Sciatic nerve (tissue), 2 donors: ENCODE measurements at regions of chr1 and their contacts with region 1.

Region 1: DNA sequence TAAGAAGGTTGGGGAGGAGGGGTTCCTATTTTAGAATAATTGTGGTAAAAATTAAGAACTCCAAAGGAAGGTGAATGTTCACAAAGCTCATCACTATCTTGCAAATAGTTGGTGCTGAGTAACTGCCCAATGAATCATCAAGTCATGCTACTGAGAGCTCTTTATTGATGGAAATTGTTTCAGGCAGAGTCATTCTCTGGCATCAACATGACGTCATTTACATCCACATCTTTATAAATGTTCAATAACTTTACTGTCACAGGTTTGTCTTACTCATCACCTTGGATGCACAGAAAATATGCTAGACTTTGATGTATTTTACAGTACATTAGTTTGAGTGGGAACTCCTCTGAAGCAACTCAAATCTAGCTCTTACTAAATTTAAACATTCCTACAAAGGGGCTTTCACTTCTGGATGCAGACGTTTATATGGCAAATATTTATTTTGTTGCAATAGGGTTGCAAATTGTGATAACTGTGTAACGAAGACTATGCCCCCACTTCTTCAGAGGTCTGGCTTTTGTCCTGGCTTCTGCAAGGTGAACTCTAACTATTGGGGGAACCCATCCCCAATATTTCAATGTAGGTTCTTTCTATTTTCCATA is 273.7 kb upstream of the AJAP1 start:
- DNase-seq: no peak
- ATAC-seq: no peak

Region 2: GRCh38 chr1:4253935-4254334 is 126.7 kb before region 1 on chr1:
- intact Hi-C with region 1: loop called (anchors 5 kb)
- DNase-seq: no peak
- ATAC-seq: no peak

Region 3: GRCh38 chr1:4468804-4469514 is 88.3 kb after region 1 on chr1:
- intact Hi-C with region 1: no loop called
- DNase-seq: no peak
- ATAC-seq: no peak

Region 4: DNA sequence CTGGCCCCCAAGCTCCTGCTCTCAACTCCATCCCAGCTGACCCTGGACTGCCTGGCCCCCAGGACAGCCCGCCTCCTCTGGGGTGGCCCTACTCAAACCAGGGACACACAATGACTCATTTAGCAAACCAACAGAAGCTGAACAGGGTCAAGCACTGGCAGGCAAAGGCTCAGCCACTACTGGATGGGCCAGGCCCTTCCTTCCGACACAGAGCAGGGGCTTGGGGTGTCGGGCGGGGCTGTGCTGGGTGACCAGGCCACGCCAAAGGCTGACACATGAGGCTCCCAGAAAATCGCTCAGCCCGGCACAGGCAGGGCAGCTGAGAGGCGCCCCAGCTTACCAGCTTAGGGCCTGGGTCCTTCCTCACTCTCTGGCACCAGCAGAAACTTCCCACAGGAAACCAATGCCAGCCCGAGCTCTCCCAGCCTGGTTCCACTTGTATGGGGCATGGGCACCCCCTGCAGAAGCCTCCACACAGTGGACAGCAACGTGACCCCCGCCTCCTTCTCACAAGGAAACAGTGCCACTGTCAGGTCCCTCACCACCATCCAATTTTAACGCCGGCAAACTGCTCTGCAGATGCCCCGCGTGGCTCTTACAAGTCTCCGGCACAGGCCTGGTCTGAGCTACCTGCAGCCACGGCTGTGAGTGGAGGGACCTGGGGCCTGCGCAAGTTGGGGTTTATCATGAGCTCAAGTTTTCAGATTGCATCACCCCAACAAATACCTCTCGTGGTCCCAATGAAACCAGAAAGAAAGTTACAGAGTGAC is 1497.3 kb after region 1 on chr1:
- intact Hi-C with region 1: loop called (anchors 10 kb)
- DNase-seq: no peak
- ATAC-seq: no peak